ENCODE measurements at regions of chr16 and their contacts with region 1.

Region 1: DNA sequence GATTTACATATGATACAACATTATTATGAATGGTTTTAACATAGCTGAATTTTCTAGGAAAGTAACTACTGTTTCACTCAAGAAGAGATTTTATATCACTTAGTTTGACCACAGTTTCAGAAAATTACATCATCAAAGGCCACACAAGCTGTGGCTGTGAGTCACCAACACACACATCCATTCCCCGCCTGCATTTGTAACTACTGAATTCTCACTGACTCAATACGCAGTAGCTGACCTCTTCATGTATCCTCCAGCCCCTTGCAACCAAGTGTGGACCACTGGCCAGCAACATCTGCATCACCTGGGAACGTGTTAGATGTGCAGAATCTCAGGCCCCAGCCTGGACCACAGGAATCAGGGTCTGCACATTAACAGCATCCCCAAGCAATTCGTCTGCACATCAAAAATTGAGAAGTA is 197.6 kb downstream of the XYLT1 start:
- DNase-seq: peak; percentile 37
- H3K4me3 Mint-ChIP-seq: no peak overlapping the region
- H3K27ac Mint-ChIP-seq: peak overlapping the region; percentile 16
- H3K4me1 Mint-ChIP-seq: peaks cover 56% of the 10 kb centered on the region
- H3K27me3 Mint-ChIP-seq: no peaks in the 10 kb centered on the region

Region 2: GRCh38 chr16:17026600-17027242 is 246.4 kb before region 1 on chr16:
- intact Hi-C with region 1: loop called (anchors 1 kb)
- DNase-seq: peak; percentile 2
- H3K4me3 Mint-ChIP-seq: no peak overlapping the region
- H3K27ac Mint-ChIP-seq: peak overlapping the region; percentile 76
- H3K4me1 Mint-ChIP-seq: peaks cover 30% of the 10 kb centered on the region
- H3K27me3 Mint-ChIP-seq: no peaks in the 10 kb centered on the region

Region 3: DNA sequence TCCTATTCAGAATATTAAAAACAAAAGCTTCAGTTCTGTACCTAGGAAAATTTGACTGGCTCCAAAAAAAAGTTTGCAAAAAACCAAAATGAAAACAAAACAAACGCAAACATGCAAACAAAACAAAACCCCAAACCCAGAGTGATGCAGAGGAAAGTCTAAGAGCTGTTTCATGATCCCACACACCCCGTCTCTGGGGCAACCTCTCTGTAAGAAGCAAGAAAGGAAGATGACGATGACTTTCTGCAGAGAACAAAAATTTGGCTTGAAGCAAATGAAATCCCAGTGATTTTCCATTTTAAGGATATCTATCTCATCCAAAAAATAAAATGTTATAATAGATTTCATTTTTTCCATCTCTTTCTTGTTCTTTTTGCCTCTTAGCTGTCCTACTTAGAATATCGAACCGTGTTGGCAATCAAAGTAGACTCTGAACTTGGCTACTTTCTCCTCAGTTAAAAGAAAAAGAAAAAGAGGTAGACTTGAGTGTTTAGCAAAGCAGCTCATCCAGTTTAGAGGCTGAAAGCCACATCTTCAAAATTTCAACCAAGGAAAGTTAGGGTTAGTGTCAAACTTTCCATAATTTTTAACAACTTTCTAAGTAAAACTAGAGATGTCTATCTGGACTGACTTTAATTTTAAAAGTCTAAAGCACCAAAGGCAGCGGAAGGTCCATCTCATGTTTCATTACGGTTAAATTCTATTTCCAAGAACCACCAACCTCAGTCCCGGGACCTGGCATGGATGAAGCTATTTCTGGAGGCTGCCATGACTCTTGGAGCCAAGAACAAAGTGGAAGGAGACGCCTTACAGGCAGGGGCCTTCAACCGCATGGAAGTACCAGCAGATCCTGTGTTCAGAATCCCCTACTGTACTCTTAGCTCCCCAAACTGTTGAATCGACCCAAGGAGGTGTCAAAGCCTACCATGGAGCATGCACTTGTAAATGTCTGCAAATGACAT is 16.8 kb after region 1 on chr16:
- intact Hi-C with region 1: loop called (anchors 1 kb)
- DNase-seq: no peak
- H3K4me3 Mint-ChIP-seq: peak overlapping the region; percentile 49
- H3K27ac Mint-ChIP-seq: peak overlapping the region; percentile 77
- H3K4me1 Mint-ChIP-seq: peaks cover 14% of the 10 kb centered on the region
- H3K27me3 Mint-ChIP-seq: no peaks in the 10 kb centered on the region

Region 4: DNA sequence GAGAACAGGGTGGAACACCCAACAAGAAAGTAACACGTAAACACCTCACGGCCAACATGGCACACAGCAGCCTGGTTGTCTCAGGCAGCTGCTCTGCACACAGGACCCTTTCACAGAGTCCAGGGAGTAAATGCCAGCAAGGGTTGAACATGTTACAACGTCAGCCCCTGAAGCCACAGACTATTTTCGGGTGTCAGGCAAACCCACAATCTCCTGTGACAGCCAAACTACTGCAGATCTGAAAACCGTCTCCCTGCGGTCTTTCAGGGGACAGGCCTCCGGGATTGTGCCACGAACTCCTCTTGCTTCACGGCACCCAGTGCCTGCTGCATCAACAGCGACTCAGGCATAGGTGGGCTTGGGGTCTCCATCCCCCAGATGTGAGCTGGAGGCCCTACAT is 69.9 kb after region 1 on chr16:
- intact Hi-C with region 1: loop called (anchors 1 kb)
- DNase-seq: peak; percentile 58
- H3K4me3 Mint-ChIP-seq: peak overlapping the region; percentile 61
- H3K27ac Mint-ChIP-seq: peak overlapping the region; percentile 58
- H3K4me1 Mint-ChIP-seq: peaks cover 77% of the 10 kb centered on the region
- H3K27me3 Mint-ChIP-seq: no peaks in the 10 kb centered on the region

Region 5: DNA sequence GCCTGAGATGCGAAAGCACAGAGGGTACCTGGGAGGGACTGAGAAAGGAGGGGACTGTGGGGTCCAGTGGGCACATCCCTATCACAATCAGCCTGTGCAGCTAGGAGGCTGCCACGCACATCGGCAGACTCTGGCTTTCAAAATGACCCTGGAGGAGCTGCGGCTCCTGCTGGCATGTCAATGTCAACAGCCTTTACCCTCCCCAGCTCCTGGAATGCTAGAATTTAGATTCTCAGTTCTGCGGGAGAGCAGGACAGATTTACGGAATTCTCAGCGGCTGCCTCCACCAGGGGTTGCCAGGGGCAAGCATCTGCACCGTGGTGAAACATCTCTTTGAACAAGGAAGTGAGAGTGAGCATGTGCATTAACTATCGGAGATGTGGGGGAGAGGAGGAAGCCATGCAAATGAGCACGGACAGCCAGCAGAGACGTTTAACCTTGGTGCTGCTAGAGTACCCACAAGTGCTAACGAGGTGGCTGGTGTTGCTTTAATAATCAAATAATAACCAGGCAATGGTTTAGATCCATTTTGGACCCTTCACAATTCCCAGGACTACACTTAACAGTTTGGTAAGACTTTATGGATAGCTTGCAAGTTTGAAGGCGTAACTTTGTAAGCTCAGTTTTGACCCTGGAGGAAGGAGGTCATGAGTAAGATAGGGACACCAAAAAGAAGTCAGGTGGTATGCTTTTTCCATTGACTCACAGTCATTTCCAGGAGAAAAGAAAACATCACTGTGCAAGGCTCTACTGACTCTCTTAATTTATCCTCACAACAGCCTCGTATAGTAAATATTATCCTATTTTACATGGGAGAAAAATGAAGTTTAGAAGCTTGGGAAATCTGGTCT is 143.5 kb after region 1 on chr16:
- intact Hi-C with region 1: loop called (anchors 1 kb)
- DNase-seq: peak; percentile 40
- H3K4me3 Mint-ChIP-seq: peak overlapping the region; percentile 82
- H3K27ac Mint-ChIP-seq: peak overlapping the region; percentile 97
- H3K4me1 Mint-ChIP-seq: peaks cover 46% of the 10 kb centered on the region
- H3K27me3 Mint-ChIP-seq: no peaks in the 10 kb centered on the region